ENCODE measurements at regions of chr22 and their contacts with region 1.

Region 1: GRCh38 chr22:37166675-37167066 is 17.0 kb upstream of the IL2RB start:
- DNase-seq: peak; percentile 72
- H3K4me3 Mint-ChIP-seq: peak overlapping the region; percentile 75
- H3K27ac Mint-ChIP-seq: peak overlapping the region; percentile 69
- H3K4me1 Mint-ChIP-seq: peaks cover 78% of the 10 kb centered on the region
- H3K27me3 Mint-ChIP-seq: peaks cover 4% of the 10 kb centered on the region

Region 2: DNA sequence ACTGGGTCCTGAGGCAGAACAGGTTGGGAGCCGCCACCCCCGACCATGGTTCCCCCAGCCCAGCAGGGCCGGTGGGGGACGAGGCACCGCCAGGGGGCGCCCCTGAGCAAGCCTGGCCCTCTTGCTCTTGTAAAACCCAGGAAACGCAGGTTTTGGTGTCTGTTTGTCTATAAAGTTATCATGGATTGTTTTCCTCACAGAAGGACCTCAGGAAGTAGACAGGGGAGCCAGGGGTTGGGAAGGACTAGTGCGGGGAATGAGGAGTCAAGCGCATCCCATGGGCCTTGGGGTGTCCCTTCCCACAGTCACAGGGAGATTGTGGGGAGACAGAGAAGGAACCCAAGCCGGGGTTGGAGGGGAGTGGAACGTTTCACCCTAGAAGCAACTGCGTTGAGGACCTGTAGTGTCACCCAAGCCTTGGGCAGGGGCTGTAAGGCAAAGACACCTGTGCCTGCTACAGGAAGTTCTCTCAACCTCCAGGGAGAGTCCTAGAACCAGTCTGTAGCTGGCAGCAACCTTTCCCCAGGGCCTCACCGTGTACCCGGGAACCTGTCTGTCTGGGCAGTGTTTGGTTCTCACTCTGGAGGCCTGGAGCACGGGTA is 88.7 kb before region 1 on chr22:
- intact Hi-C with region 1: loop called (anchors 1 kb)
- DNase-seq: peak; percentile 79
- H3K4me3 Mint-ChIP-seq: peak overlapping the region; percentile 49
- H3K27ac Mint-ChIP-seq: peak overlapping the region; percentile 95
- H3K4me1 Mint-ChIP-seq: peaks cover 53% of the 10 kb centered on the region
- H3K27me3 Mint-ChIP-seq: peaks cover 3% of the 10 kb centered on the region

Region 3: DNA sequence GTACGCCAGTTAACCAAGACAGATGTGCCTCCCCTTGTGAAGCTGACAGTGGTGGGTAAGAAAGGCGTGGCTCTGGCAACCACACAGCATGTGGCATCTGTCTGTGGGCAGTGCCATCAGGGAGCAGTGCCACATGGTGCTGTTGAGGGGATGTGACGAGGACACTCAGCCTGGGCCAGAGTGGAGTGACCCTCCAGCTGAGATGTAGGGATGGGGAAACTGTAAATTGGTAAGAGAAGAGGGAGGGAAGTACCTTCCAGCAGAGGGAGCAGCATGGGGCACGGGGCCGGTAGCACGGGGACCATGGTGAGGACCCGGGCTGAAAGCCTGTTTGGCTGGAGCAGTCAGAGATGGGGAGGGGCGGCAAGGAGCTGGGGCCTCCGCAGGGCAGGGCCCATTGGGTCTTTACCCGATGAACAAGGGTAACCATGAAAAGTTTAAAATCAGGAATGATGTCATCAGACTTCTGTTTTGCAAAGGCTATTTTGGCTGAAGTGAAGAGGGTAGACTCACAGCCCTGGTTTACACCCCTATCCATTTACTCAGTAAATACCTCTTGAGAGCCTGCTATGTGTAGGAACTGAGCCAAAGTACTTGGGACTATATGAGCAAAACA is 67.6 kb before region 1 on chr22:
- intact Hi-C with region 1: no loop called
- DNase-seq: no peak
- H3K4me3 Mint-ChIP-seq: no peak overlapping the region
- H3K27ac Mint-ChIP-seq: no peak overlapping the region
- H3K4me1 Mint-ChIP-seq: peaks cover 52% of the 10 kb centered on the region
- H3K27me3 Mint-ChIP-seq: peaks cover 6% of the 10 kb centered on the region

Region 4: DNA sequence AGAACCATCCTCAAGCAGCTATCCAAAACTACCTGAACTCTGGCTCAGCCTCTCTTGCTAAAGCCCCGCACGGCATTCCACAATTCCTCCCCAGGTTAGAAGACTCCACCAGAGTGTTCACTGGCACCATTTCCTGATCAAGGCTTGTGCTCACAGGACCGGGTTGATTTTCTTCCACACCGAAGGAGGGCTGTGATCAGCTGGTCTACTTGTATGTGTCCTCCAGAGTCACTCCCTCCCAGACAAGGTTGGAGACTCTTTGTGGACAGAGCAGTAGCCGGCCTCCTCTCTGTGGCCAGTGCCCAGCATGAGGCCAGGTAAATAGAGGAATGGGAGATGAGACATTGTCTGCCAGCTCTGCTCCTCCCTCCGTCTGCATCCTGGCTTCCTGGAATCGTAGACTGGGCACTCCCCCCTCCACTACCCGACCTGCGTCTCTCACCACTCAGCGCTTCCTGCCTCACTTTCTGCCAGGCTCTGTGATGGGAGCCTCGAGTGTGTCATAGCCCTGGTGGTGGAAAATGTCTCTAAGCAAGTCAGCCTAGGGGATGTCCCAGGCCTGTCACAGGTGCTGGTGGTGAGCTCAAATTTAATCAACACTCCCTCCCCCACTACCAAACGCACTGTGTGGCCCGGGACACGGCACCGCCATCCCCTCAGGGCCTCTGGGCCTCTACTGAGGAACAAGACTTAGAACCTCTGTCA is 44.6 kb before region 1 on chr22:
- intact Hi-C with region 1: loop called (anchors 1 kb)
- DNase-seq: peak; percentile 93
- H3K4me3 Mint-ChIP-seq: peak overlapping the region; percentile 86
- H3K27ac Mint-ChIP-seq: peak overlapping the region; percentile 100
- H3K4me1 Mint-ChIP-seq: peaks cover 85% of the 10 kb centered on the region
- H3K27me3 Mint-ChIP-seq: peaks cover 2% of the 10 kb centered on the region

Region 5: GRCh38 chr22:37139762-37140161 is 26.9 kb before region 1 on chr22:
- intact Hi-C with region 1: loop called (anchors 1 kb)
- DNase-seq: no peak
- H3K4me3 Mint-ChIP-seq: peak overlapping the region; percentile 9
- H3K27ac Mint-ChIP-seq: peak overlapping the region; percentile 91
- H3K4me1 Mint-ChIP-seq: peaks cover 54% of the 10 kb centered on the region
- H3K27me3 Mint-ChIP-seq: no peaks in the 10 kb centered on the region

Region 6: GRCh38 chr22:37148742-37149665 is 17.7 kb before region 1 on chr22:
- intact Hi-C with region 1: loop called (anchors 1 kb)
- DNase-seq: no peak
- H3K4me3 Mint-ChIP-seq: peak overlapping the region; percentile 92
- H3K27ac Mint-ChIP-seq: peak overlapping the region; percentile 93
- H3K4me1 Mint-ChIP-seq: peaks cover 72% of the 10 kb centered on the region
- H3K27me3 Mint-ChIP-seq: no peaks in the 10 kb centered on the region

Region 7: GRCh38 chr22:37218771-37219411 is 52.2 kb after region 1 on chr22:
- intact Hi-C with region 1: loop called (anchors 1 kb)
- DNase-seq: peak; percentile 72
- H3K4me3 Mint-ChIP-seq: peak overlapping the region; percentile 79
- H3K27ac Mint-ChIP-seq: peak overlapping the region; percentile 96
- H3K4me1 Mint-ChIP-seq: peaks cover 68% of the 10 kb centered on the region
- H3K27me3 Mint-ChIP-seq: no peaks in the 10 kb centered on the region

Region 8: DNA sequence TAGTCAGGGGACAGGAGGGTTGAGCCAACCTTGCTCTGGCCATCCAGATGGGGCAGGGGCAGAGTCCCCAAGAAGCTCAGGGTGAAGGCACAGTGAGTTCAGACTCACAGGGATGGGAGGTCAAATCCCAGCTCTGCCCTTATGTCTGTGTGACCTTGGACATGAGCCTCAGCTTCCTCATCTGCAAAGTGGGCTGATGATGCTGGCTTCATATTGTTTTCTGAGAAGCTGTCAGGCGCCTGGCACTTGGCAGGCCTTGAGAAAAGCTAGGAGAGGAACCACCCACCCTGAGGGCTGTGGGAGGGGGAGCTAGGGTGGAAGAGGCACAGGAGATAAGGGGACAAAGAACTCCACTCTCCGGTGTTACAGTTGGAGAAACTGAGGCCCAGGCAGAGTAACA is 139.2 kb after region 1 on chr22:
- intact Hi-C with region 1: loop called (anchors 1 kb)
- DNase-seq: no peak
- H3K4me3 Mint-ChIP-seq: no peak overlapping the region
- H3K27ac Mint-ChIP-seq: peak overlapping the region; percentile 100
- H3K4me1 Mint-ChIP-seq: peaks cover 83% of the 10 kb centered on the region
- H3K27me3 Mint-ChIP-seq: no peaks in the 10 kb centered on the region

Measured in activated T-helper 1 cell treated with anti-CD3 and anti-CD28 coated beads, Interleukin-12 subunit alpha, Interleukin-12 subunit beta, Interleukin-2, Interleukin-4 antibody, amounts not matched to agents 30 ng/mL and 10 ng/mL and 1 ng/mL, durations not matched to agents 14 hours and 24 hours and 36 hours (primary cell).